CD4-positive, alpha-beta T cell (primary cell): ENCODE measurements at regions of chr17 and their contacts with region 1.

Region 1: GRCh38 chr17:56367366-56367765 is 214.1 kb downstream of the ANKFN1 start:
- DNase-seq: no peak
- ATAC-seq: no peak
- H3K4me3 ChIP-seq: no peak overlapping the region
- H3K4me3 Mint-ChIP-seq: no peak overlapping the region
- H3K27ac ChIP-seq: no peak overlapping the region
- H3K27ac Mint-ChIP-seq: no peak overlapping the region
- H3K4me1 ChIP-seq: no peaks in the 10 kb centered on the region
- H3K4me1 Mint-ChIP-seq: no peaks in the 10 kb centered on the region
- H3K27me3 ChIP-seq: no peaks in the 10 kb centered on the region
- H3K27me3 Mint-ChIP-seq: no peaks in the 10 kb centered on the region
- CTCF ChIP-seq: no peak

Region 2: DNA sequence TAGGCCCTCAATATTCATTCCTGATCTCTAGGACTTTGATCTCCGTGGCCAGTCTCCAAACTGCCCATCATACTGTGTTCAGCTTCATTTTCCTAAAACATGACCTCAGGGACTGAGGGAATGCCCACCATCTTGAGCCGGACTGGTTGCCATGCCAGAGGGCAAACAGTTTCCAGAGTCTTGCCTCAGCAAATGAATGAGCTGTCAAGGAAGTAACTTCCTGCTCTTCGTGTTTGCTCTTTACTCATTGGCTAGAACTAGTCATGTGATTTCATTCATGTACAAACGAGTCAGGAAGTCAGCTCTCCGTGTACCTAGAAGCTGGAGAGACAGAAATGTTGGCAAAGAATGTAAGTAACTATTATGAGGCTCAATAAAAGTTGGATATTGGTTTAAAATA is 163.9 kb before region 1 on chr17:
- CTCF ChIA-PET with region 1: no interaction called
- POLR2A ChIA-PET with region 1: no interaction called
- intact Hi-C with region 1: loop called in 1 of 2 experiments (anchors 10 kb)
- DNase-seq: peak in 1 of 14 experiments; percentile 1
- ATAC-seq: no peak
- H3K4me3 ChIP-seq: no peak overlapping the region
- H3K4me3 Mint-ChIP-seq: no peak overlapping the region
- H3K27ac ChIP-seq: no peak overlapping the region
- H3K27ac Mint-ChIP-seq: no peak overlapping the region
- H3K4me1 ChIP-seq: no peaks in the 10 kb centered on the region
- H3K4me1 Mint-ChIP-seq: no peaks in the 10 kb centered on the region
- H3K27me3 ChIP-seq: no peaks in the 10 kb centered on the region
- H3K27me3 Mint-ChIP-seq: no peaks in the 10 kb centered on the region
- CTCF ChIP-seq: no peak

Region 3: DNA sequence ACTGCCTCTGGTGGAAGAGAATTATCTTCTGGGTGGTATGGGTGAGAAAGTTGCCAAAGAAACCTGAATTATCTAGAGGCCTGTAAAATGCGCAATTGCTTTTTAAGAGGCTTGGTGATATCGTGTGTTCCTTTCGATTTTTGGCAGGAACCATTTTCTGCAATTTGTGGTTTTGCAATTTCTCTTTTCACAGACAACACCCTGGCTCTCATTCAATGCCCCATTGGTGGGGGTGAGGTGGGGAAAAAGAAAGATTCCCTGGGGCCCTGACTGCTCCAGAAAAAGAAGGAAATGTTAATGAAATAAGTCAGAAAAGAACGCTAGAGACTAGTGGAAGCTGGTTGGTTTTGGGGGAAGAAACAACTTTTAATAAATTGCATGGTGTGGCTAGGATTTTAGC is 136.7 kb before region 1 on chr17:
- CTCF ChIA-PET with region 1: no interaction called
- POLR2A ChIA-PET with region 1: no interaction called
- intact Hi-C with region 1: no loop called
- DNase-seq: no peak
- ATAC-seq: no peak
- H3K4me3 ChIP-seq: no peak overlapping the region
- H3K4me3 Mint-ChIP-seq: no peak overlapping the region
- H3K27ac ChIP-seq: no peak overlapping the region
- H3K27ac Mint-ChIP-seq: no peak overlapping the region
- H3K4me1 ChIP-seq: no peaks in the 10 kb centered on the region
- H3K4me1 Mint-ChIP-seq: no peaks in the 10 kb centered on the region
- H3K27me3 ChIP-seq: no peaks in the 10 kb centered on the region
- H3K27me3 Mint-ChIP-seq: no peaks in the 10 kb centered on the region
- CTCF ChIP-seq: no peak